ENCODE measurements at regions of chr3 and their contacts with region 1.

Region 1: GRCh38 chr3:143001369-143002082 is at the start of gene U2SURP:
- DNase-seq: peak; percentile 94 to 96
- H3K4me3 ChIP-seq: peak within 1 kb of the TSS; percentile 93
- H3K27ac ChIP-seq: peak within 1 kb of the TSS; percentile 96
- H3K4me1 ChIP-seq: peaks cover 42% of the 10 kb centered on the region
- H3K27me3 ChIP-seq: no peaks in the 10 kb centered on the region
- CTCF ChIP-seq: no peak
- total RNA-seq, gene U2SURP: 104 and 126 TPM in 2 replicates

Region 2: DNA sequence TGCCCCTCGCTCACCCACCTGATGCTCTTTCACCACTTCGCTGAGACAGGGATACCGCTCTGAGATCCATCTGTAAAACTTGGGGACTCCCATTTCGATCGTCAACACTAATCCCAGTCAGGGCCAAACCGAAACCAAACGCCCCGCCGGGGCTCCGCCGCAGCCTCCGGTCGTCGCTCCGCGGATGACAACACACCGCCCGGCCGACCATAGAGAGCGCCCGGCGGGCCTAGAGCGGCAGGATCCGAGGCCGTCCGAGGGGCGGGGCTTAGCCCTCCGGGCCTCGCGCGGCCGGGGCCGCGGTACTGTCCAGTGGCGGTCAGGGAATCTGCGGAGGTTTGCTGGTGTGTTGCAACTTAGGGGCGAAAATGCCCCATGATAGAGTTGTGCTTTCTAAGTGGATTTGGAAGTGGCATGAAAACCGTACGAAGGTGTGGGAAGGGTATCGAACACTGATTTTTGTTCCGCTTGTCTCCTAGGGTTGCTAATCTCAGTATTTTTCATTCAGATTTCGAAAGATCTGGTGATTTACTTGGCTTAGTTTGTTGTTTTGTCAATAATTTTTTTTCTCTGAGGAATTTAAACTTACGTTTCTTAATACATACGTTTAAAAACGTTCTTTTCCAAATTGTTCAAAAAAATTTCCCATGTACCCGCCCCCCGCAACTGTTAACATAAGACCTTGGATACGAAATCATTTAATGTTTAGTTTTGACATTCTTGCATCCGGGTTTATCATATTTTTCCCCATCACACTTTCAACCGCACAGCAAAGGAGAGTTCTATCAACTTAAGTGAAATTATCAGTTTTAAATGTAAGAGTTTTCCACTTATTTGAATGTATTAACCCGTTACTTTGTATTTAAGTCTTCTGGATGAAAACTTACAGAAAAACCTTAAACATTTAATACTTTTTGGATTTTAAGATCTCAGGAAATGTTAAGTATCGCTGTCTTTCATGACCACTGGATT is 553.4 kb before region 1 on chr3 and contains the start of gene XRN1:
- CTCF ChIA-PET with region 1: no interaction called
- POLR2A ChIA-PET with region 1: no interaction called
- intact Hi-C with region 1: loop called (anchors 5 kb)
- DNase-seq: peak; percentile 81 to 98
- H3K4me3 ChIP-seq: peak within 1 kb of the TSS; percentile 80
- H3K27ac ChIP-seq: peak within 1 kb of the TSS; percentile 69
- H3K4me1 ChIP-seq: peaks cover 20% of the 10 kb centered on the region
- H3K27me3 ChIP-seq: no peaks in the 10 kb centered on the region
- CTCF ChIP-seq: no peak
- total RNA-seq, gene XRN1: 45.3 and 47.0 TPM in 2 replicates

Region 3: GRCh38 chr3:142536519-142536918 is 465.0 kb before region 1 on chr3:
- CTCF ChIA-PET with region 1: interaction called, 11 read pairs
- POLR2A ChIA-PET with region 1: no interaction called
- intact Hi-C with region 1: no loop called
- DNase-seq: no peak
- H3K4me3 ChIP-seq: no peak overlapping the region
- H3K27ac ChIP-seq: no peak overlapping the region
- H3K4me1 ChIP-seq: no peaks in the 10 kb centered on the region
- H3K27me3 ChIP-seq: no peaks in the 10 kb centered on the region
- CTCF ChIP-seq: no peak

Region 4: DNA sequence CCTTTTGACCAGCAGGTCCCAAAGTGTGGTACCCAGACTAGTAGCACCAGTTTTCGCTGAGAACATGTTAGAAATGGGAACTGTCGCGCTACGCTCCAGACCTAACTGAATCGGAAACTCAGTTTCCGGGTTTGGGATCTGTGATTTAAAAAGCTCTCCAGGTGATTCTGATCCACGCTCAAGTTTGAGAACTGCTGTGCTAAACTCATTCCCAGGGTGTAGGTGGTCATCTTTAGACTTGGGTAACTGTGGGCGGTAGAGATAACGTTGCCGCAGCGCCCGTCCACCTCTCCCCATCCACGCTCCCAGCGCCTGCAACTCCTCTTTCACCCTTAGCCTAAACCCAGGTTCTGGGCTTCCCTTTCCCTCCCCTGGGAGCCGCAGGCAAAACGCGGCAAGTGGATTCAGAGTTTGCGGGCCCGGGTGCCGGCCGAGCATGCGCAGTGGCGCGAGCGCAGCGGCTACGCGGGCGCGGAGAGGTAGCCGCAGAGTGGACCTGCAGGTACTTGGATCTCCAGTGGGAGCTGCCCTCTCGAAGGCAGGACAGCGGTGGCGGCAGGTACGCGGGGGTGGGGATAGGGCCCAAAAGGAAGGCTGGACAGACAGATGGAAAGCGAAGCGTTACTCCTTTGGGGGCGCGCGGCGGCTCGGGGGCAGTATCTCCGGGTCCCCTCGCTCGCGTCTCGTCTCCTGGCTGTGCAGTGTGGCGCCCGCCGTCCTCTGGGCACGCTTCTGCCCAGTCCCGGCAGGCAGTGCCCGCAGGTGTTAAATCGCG is 405.4 kb before region 1 on chr3 and contains the start of gene PLS1:
- CTCF ChIA-PET with region 1: no interaction called
- POLR2A ChIA-PET with region 1: interaction called, 11 read pairs
- intact Hi-C with region 1: loop called (anchors 2 kb)
- DNase-seq: peak; percentile 80 to 99
- H3K4me3 ChIP-seq: peak within 1 kb of the TSS; percentile 73
- H3K27ac ChIP-seq: peak within 1 kb of the TSS; percentile 91
- H3K4me1 ChIP-seq: peaks cover 30% of the 10 kb centered on the region
- H3K27me3 ChIP-seq: no peaks in the 10 kb centered on the region
- CTCF ChIP-seq: no peak
- total RNA-seq, gene PLS1: 50.4 and 53.8 TPM in 2 replicates

Region 5: DNA sequence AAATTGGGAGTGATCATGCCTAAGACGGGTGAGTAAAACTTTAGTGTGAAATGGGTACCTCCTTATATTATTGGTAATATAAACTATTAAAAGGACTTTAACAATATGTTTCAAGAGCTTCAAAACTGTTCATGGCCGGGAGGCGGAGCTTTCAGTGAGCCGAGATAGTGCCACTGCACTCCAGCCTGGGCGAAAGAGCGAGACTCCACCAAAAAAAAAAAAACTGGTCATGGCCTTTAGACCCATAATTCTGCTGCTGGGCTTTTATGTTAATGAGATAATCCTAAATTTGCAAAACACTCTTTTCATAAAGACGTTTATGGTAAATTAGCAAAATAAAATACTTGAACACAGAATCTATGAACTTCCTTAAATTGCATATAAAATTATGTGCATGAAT is 254.9 kb before region 1 on chr3:
- CTCF ChIA-PET with region 1: no interaction called
- POLR2A ChIA-PET with region 1: no interaction called
- intact Hi-C with region 1: no loop called
- DNase-seq: no peak
- H3K4me3 ChIP-seq: no peak overlapping the region
- H3K27ac ChIP-seq: no peak overlapping the region
- H3K4me1 ChIP-seq: no peaks in the 10 kb centered on the region
- H3K27me3 ChIP-seq: no peaks in the 10 kb centered on the region
- CTCF ChIP-seq: no peak

Region 6: DNA sequence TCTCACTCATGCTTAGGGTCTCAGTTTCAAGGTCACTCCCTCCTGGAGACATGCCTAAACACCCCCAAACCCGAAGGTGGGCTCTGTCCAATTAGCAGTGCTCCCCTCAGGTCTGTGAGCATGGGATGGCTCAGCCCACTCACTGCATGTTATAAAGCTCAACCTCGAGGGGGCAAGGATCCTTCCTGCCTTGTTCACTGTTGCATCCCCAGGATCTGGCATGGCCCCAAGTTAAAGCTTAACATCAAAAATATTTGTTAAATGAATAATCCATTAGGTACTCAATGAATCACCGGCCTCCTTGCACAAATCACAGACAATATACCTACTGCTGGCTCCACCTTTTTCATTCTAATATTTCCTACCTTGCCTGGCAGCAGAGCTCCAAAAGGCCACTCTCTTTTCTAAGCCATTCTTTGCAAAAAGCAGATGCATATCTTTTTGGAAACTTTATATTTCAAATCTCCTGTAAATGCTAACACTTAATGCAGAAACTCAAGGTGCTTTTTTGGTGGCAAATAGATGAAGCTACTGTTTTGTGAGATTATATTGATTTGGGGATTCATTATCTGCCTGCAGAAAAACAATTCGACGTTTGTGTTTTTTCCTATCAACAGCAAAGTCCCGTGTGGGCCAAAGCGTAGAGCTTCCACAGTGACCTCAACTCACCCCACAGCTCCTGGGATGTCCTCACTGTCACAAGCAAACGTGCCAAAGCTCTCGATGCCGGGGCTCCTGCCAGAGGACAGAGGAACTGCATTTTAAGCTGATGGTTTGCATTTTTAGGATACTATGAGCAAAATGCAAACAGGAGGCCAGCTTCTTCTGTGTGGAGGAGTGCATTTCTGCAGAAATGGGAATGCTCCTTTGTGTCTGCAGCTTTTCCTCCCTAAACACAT is 148.0 kb before region 1 on chr3:
- CTCF ChIA-PET with region 1: no interaction called
- POLR2A ChIA-PET with region 1: interaction called, 14 read pairs
- intact Hi-C with region 1: no loop called
- DNase-seq: peak; percentile 66 to 89
- H3K4me3 ChIP-seq: no peak overlapping the region
- H3K27ac ChIP-seq: no peak overlapping the region
- H3K4me1 ChIP-seq: peaks cover 53% of the 10 kb centered on the region
- H3K27me3 ChIP-seq: no peaks in the 10 kb centered on the region
- CTCF ChIP-seq: no peak

Region 7: GRCh38 chr3:143380449-143380848 is 378.9 kb after region 1 on chr3:
- CTCF ChIA-PET with region 1: interaction called, 12 read pairs
- POLR2A ChIA-PET with region 1: no interaction called
- intact Hi-C with region 1: no loop called
- DNase-seq: no peak
- H3K4me3 ChIP-seq: no peak overlapping the region
- H3K27ac ChIP-seq: no peak overlapping the region
- H3K4me1 ChIP-seq: no peaks in the 10 kb centered on the region
- H3K27me3 ChIP-seq: no peaks in the 10 kb centered on the region
- CTCF ChIP-seq: no peak

Region 8: GRCh38 chr3:143464850-143465249 is 463.3 kb after region 1 on chr3:
- CTCF ChIA-PET with region 1: no interaction called
- POLR2A ChIA-PET with region 1: no interaction called
- intact Hi-C with region 1: no loop called
- DNase-seq: no peak
- H3K4me3 ChIP-seq: no peak overlapping the region
- H3K27ac ChIP-seq: no peak overlapping the region
- H3K4me1 ChIP-seq: no peaks in the 10 kb centered on the region
- H3K27me3 ChIP-seq: no peaks in the 10 kb centered on the region
- CTCF ChIP-seq: no peak

Measured in PC-9 (cell line).